IMR-90 (cell line): ENCODE measurements at regions of chr6 and their contacts with region 1.

Region 1: DNA sequence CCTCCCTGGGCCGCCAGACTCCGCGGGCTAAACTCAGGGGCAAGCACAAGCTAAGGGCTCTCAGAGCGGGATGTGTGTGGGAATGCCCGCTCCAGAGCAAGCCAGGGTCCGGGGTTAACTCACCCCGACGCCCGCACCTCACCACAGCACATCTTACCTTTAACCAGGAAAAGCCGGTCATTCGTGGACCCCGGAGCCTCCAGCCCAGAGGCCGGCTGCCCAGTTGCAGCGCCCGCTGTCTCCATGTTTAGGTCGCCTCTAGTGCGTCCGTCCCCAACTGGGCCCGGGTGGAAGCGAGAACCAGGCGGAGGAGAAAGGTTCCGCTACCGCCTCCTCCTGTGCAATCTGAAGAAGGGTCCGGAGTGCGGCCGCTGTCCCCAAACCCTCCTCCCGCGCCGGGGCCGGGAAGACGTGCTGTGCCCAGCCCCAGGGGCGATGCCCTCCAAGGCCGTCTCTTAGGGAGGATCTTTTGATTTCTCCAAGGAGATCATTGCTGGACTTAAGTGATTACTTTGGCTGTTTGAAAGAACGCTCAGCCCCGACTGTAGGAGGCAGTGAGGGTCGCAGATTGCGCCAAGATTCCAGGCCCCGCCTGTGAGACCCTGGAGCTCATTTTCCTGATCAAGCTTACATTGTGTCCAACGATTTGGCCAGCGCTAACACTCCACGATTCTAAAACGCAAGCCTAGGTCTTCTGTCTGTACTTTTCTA is at the start of gene TMEM242:
- DNase-seq: peak; percentile 93
- ATAC-seq: peak; percentile 96
- H3K4me3 ChIP-seq: peak within 1 kb of the TSS; percentile 86
- H3K27ac ChIP-seq: peak within 1 kb of the TSS; percentile 84
- H3K4me1 ChIP-seq: no peaks in the 10 kb centered on the region
- H3K27me3 ChIP-seq: no peaks in the 10 kb centered on the region
- CTCF ChIP-seq: no peak
- POLR2A ChIP-seq: peak; percentile 85
- RAD21 ChIP-seq: 0 out of 2 replicates have a peak, but pooled peaks have one; percentile 32
- total RNA-seq, gene TMEM242: 2.3 and 4.2 TPM in 2 replicates

Region 2: GRCh38 chr6:157597446-157598312 is 274.3 kb after region 1 on chr6:
- CTCF ChIA-PET with region 1: interaction called, 4 read pairs
- POLR2A ChIA-PET with region 1: no interaction called
- dilution Hi-C with region 1: no loop called
- in situ Hi-C with region 1: no loop called
- intact Hi-C with region 1: loop called (anchors 2 kb)
- DNase-seq: no peak
- ATAC-seq: peak; percentile 74
- H3K4me3 ChIP-seq: no peak overlapping the region
- H3K27ac ChIP-seq: peak overlapping the region; percentile 81; the same call in 1 of the 2 replicates
- H3K4me1 ChIP-seq: peaks cover 12% of the 10 kb centered on the region
- H3K27me3 ChIP-seq: no peaks in the 10 kb centered on the region
- CTCF ChIP-seq: peak; percentile 53
- POLR2A ChIP-seq: no peak
- RAD21 ChIP-seq: peak; percentile 59

Region 3: DNA sequence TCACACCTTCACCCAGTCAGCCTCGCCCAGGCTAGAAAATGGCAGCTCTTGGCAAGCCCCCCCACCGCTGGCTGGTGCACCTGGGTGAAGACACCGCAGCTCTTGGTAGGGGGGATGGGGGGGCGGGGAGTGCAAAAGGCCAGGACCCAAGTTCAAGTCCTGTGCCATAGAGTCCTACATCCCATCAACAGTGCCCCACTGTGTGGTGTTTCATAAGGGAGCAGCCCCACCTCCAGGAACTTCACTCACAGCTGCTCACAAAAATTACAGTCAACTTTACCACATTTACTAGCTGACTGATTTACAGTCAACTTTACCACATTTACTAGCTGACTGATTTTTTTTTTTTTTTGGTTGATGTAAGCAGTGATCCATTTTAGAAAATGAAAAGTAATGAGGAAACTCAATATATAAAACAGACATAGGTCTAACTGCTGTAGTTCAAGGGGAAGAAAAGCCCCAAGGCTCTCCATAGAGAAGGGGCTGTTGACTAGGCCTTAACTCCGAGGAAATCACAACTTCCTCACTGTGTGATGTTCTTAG is 290.7 kb after region 1 on chr6:
- CTCF ChIA-PET with region 1: interaction called, 3 read pairs
- POLR2A ChIA-PET with region 1: no interaction called
- dilution Hi-C with region 1: no loop called
- in situ Hi-C with region 1: no loop called
- intact Hi-C with region 1: loop called (anchors 5 kb)
- DNase-seq: peak; percentile 41
- ATAC-seq: no peak
- H3K4me3 ChIP-seq: no peak overlapping the region
- H3K27ac ChIP-seq: peak overlapping the region; percentile 67; the same call in 1 of the 2 replicates
- H3K4me1 ChIP-seq: peaks cover 22% of the 10 kb centered on the region
- H3K27me3 ChIP-seq: no peaks in the 10 kb centered on the region
- CTCF ChIP-seq: peak; percentile 20; the same call in 1 of the 2 replicates
- POLR2A ChIP-seq: no peak
- RAD21 ChIP-seq: no peak

Region 4: DNA sequence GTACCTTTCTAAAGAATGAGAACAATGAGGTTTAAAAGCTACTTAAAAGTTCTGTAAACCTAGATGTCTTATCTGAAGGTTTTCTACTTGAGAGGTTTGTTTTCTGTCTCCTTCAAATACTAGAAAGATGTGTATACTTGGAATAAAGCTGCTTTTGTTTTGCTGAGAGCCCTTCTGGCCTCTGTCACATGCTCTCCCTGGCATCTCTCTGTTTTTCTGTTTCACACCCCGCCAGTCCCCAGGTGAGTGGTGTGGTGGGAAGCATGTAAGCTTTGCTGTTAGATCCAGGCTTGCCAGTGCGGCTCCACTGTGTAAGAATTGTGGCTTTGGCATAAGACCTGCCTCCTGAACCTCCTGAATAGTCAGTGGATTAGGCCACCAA is 556.5 kb after region 1 on chr6:
- CTCF ChIA-PET with region 1: no interaction called
- POLR2A ChIA-PET with region 1: no interaction called
- dilution Hi-C with region 1: no loop called
- in situ Hi-C with region 1: loop called (anchors 25 kb)
- intact Hi-C with region 1: no loop called
- DNase-seq: no peak
- ATAC-seq: no peak
- H3K4me3 ChIP-seq: no peak overlapping the region
- H3K27ac ChIP-seq: no peak overlapping the region
- H3K4me1 ChIP-seq: no peaks in the 10 kb centered on the region
- H3K27me3 ChIP-seq: no peaks in the 10 kb centered on the region
- CTCF ChIP-seq: no peak
- POLR2A ChIP-seq: no peak
- RAD21 ChIP-seq: no peak